Naive thymus-derived CD4-positive, alpha-beta T cell (primary cell): ENCODE measurements at regions of chr1 and their contacts with region 1.

Region 1: GRCh38 chr1:39653546-39654031 is 14.1 kb upstream of the HEYL start:
- DNase-seq: peak; percentile 51 to 74 (median 68)
- ATAC-seq: peak; percentile 89
- H3K4me3 ChIP-seq: no peak overlapping the region
- H3K4me3 Mint-ChIP-seq: no peak overlapping the region
- H3K27ac ChIP-seq: no peak overlapping the region
- H3K27ac Mint-ChIP-seq: no peak overlapping the region
- H3K4me1 ChIP-seq: peaks cover 0 to 3% of the 10 kb centered on the region in 2 donors
- H3K4me1 Mint-ChIP-seq: peaks cover 0 to 17% (median 4%) of the 10 kb centered on the region in 7 donors
- H3K27me3 ChIP-seq: no peaks in the 10 kb centered on the region
- H3K27me3 Mint-ChIP-seq: peaks cover 0 to 13% (median 0%) of the 10 kb centered on the region in 5 donors

Region 2: DNA sequence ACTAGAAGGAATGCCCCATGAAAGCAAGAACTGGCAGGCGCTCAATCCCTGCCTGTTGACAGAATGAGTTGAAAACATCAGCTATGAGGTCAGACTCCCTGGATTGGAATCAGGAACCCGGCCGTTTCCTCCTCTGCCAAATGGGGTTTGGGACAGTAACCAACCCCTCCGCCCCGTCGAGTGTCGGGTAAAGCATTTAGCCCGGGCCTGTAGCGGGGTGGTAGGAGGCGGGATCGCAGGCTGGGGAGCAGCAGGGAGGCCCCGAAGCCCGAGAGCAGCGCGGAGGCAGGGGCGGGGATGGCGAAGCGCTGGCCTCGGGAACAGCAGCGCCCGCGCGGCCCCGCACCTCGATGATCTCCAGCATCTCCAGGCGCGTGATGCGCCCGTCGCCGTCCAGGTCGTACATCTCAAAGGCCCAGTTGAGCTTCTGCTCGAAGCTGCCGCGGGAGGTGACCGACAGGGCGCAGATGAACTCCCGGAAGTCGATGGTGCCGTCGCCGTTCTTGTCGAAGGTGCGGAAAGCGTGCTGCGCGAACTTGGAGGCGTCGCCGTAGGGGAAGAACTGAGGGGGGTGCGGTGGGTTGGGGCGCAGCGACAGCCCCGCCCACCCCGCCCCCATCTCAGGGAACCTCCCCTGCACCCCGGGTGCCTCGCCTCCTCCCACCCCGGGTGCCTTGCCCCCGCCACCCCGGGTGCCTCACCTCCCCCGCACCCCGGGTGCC is 30.2 kb after region 1 on chr1:
- CTCF ChIA-PET with region 1: interaction called, 12 read pairs
- POLR2A ChIA-PET with region 1: interaction called, 5 read pairs
- intact Hi-C with region 1: no loop called
- DNase-seq: peak in 6 of 9 donors; percentile 39 to 73 (median 57)
- ATAC-seq: peak; percentile 75
- H3K4me3 ChIP-seq: peak overlapping the region; percentile 37
- H3K4me3 Mint-ChIP-seq: peak overlapping the region in 8 of 10 donors; percentile 23 to 70 (median 58)
- H3K27ac ChIP-seq: peak overlapping the region; percentile 60
- H3K27ac Mint-ChIP-seq: peak overlapping the region in 6 of 9 donors; percentile 16 to 75 (median 36)
- H3K4me1 ChIP-seq: peaks cover 0 to 36% of the 10 kb centered on the region in 2 donors
- H3K4me1 Mint-ChIP-seq: peaks cover 14 to 55% (median 35%) of the 10 kb centered on the region in 7 donors
- H3K27me3 ChIP-seq: no peaks in the 10 kb centered on the region
- H3K27me3 Mint-ChIP-seq: peaks cover 0 to 46% (median 26%) of the 10 kb centered on the region in 5 donors

Region 3: GRCh38 chr1:39711104-39711965 is 57.7 kb after region 1 on chr1:
- CTCF ChIA-PET with region 1: no interaction called
- POLR2A ChIA-PET with region 1: no interaction called
- intact Hi-C with region 1: no loop called
- DNase-seq: no peak
- ATAC-seq: no peak
- H3K4me3 ChIP-seq: no peak overlapping the region
- H3K4me3 Mint-ChIP-seq: no peak overlapping the region
- H3K27ac ChIP-seq: no peak overlapping the region
- H3K27ac Mint-ChIP-seq: no peak overlapping the region
- H3K4me1 ChIP-seq: no peaks in the 10 kb centered on the region
- H3K4me1 Mint-ChIP-seq: no peaks in the 10 kb centered on the region
- H3K27me3 ChIP-seq: no peaks in the 10 kb centered on the region
- H3K27me3 Mint-ChIP-seq: peaks cover 5 to 35% (median 16%) of the 10 kb centered on the region in 5 donors